Right cardiac atrium (tissue), 5 donors: ENCODE measurements at regions of chr5 and their contacts with region 1.

Region 1: GRCh38 chr5:131810510-131811249 is 13.9 kb upstream of the FNIP1 start:
- DNase-seq: no peak
- ATAC-seq: peak; percentile 62 to 87
- H3K4me3 ChIP-seq: no peak overlapping the region
- H3K27ac ChIP-seq: no peak overlapping the region
- H3K4me1 ChIP-seq: no peaks in the 10 kb centered on the region
- H3K27me3 ChIP-seq: no peaks in the 10 kb centered on the region

Region 2: GRCh38 chr5:132007399-132008165 is 196.9 kb after region 1 on chr5:
- intact Hi-C with region 1: loop called in 3 of 4 experiments (anchors 5 to 10 kb)
- DNase-seq: peak; percentile 76 to 82 (median 78)
- ATAC-seq: peak; percentile 65 to 79
- H3K4me3 ChIP-seq: no peak overlapping the region
- H3K27ac ChIP-seq: no peak overlapping the region
- H3K4me1 ChIP-seq: peaks cover 12% of the 10 kb centered on the region
- H3K27me3 ChIP-seq: no peaks in the 10 kb centered on the region

Region 3: GRCh38 chr5:132301344-132302271 is 490.9 kb after region 1 on chr5:
- intact Hi-C with region 1: no loop called
- DNase-seq: no peak
- ATAC-seq: peak; percentile 66
- H3K4me3 ChIP-seq: no peak overlapping the region
- H3K27ac ChIP-seq: peak overlapping the region; percentile 83
- H3K4me1 ChIP-seq: peaks cover 13% of the 10 kb centered on the region
- H3K27me3 ChIP-seq: no peaks in the 10 kb centered on the region

Region 4: DNA sequence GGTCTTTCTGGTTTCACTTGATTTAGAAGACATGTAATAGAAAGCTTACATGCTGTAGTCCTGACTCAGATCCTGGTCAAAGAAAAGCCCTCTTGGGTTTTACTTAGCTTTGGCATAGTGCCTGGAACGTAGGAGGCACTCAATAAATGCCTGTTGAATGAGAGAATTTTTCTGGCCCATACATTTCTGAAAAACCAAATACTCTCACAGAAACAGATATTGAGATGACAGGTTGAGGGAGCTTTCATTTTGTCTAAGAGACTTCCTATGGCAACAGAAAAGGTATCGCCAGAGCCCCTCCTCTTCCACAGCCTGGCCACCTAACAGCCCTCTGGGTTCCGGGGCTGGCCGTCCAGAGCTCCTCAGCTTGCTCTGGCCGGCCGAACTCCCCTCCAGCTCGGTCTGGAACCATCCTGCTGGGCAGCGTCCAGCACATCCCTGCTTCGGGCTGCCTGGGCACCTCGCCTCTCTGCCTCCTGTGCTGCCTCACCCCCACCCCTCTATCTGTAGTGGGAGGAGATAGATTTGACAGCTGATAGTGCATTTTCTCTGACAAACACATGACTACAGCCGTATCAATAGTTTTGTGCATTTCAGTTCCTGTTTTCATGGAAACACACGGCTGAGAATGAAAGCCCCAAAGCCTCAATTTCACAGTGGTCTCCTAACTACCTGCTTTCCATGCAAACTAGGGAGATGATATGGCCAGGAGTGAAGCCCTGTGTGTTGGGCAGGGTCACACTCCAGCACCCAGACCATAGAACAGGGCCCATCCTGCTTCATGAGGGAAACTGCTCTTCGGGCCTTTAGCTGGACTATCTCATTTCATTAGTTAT is 864.2 kb after region 1 on chr5:
- intact Hi-C with region 1: no loop called
- DNase-seq: peak in 1 of 3 donors; percentile 56
- ATAC-seq: peak; percentile 34 to 54
- H3K4me3 ChIP-seq: no peak overlapping the region
- H3K27ac ChIP-seq: no peak overlapping the region
- H3K4me1 ChIP-seq: no peaks in the 10 kb centered on the region
- H3K27me3 ChIP-seq: no peaks in the 10 kb centered on the region